HAP-1 (cell line): ENCODE measurements at regions of chr1 and their contacts with region 1.

Region 1: DNA sequence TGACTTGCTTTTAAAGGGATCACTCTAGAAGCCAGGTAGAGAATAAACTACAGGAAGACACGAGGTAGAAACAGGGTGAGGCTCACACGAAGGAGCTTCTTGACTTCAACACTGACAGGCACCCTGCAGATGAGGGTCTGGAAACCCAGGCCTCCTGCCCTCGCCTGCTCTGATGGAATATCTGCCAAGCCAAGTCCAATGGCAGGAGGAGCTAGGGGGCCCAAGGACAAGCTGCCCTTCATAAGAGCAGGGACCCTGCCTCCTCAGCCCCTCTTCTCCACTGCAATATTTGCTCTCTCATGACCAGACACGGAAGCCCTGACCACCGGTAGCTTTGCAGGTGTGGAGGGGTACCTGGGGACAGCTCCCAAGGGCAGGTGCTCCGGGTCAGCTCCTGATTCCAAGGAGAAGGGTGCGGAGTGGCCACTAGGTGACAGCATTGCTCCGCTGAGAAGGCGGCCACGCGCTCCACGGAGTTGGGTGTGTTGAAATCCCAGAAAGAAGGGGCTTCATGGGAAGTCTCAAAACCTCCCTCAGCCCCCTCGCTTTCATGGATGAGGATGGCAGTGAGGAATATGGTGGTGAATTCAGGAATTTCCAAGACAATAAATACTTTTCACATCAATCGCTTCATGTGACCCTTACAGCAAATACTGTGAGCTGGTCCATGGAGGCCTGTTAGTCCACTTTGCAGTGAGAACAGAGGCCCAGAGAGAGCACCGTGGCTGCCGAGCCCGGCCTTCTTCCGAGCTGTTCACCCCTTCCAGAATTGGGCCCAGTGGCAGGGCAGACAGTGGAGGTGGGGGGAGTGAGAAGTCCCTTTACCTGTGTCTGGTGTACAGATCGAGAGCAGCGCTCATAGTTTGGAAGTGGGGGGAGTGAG is 33.2 kb upstream of the PAX7 start:
- DNase-seq: peak; percentile 49 to 79
- H3K4me3 ChIP-seq: no peak overlapping the region
- H3K4me1 ChIP-seq: no peaks in the 10 kb centered on the region
- H3K27me3 ChIP-seq: no peaks in the 10 kb centered on the region; the same call in 1 of the 2 replicates

Region 2: GRCh38 chr1:17502326-17502778 is 1095.0 kb before region 1 on chr1:
- in situ Hi-C with region 1: loop called (anchors 25 kb)
- DNase-seq: peak; percentile 70 to 91
- H3K4me3 ChIP-seq: no peak overlapping the region
- H3K4me1 ChIP-seq: no peaks in the 10 kb centered on the region
- H3K27me3 ChIP-seq: no peaks in the 10 kb centered on the region

Region 3: GRCh38 chr1:17661546-17662157 is 935.7 kb before region 1 on chr1:
- in situ Hi-C with region 1: loop called (anchors 25 kb)
- DNase-seq: peak; percentile 43 to 84
- H3K4me3 ChIP-seq: no peak overlapping the region
- H3K4me1 ChIP-seq: 0 out of 2 replicates have a peak, but pooled peaks cover 5% of the 10 kb centered on the region
- H3K27me3 ChIP-seq: no peaks in the 10 kb centered on the region

Region 4: GRCh38 chr1:18413541-18414305 is 183.7 kb before region 1 on chr1:
- in situ Hi-C with region 1: no loop called
- DNase-seq: no peak
- H3K4me3 ChIP-seq: no peak overlapping the region
- H3K4me1 ChIP-seq: peaks cover 28% of the 10 kb centered on the region
- H3K27me3 ChIP-seq: no peaks in the 10 kb centered on the region

Region 5: GRCh38 chr1:18820791-18821641 is 223.6 kb after region 1 on chr1:
- in situ Hi-C with region 1: loop called (anchors 5 kb)
- DNase-seq: peak; percentile 48 to 86
- H3K4me3 ChIP-seq: no peak overlapping the region
- H3K4me1 ChIP-seq: no peaks in the 10 kb centered on the region
- H3K27me3 ChIP-seq: peaks cover 22% of the 10 kb centered on the region